Activated CD4-positive, alpha-beta memory T cell treated with anti-CD3 and anti-CD28 coated beads for 36 hours (primary cell): ENCODE measurements at regions of chr12 and their contacts with region 1.

Region 1: DNA sequence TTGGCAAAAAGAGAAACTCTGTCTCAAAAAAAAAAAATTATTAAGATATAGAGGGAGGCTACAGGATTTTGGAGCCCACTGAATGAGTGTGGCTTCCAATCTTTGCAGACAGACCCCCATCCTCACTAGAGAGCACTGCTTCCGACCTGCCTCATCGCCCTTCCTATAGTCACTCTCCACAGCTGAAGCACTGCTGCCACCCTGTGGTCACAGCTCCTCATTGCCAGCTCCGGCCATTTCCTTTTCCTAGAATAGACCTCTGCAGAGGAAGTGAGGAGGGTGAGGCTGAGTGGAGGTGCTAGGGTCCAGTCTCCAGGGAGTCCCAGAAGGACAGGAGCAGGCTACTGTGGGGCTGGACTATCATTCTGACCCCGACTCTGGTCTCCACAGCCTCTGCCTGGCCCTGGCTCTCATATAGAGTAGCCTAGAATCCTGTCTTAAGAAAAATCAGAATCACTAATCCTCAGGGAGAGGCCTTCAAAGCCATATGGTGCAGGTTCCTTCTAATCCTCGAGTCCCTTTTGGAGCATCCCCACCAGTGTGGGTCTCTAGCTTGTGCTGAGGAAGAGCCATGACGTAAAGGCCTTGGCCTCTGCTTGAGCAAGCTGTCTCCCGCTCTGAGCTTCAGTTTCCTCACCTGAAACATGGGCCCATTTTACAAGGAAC is 1.4 kb upstream of the NPFF start:
- DNase-seq: peak; percentile 92
- H3K4me3 Mint-ChIP-seq: no peak overlapping the region
- H3K27ac Mint-ChIP-seq: peak overlapping the region; percentile 67
- H3K4me1 Mint-ChIP-seq: peaks cover 12% of the 10 kb centered on the region
- H3K27me3 Mint-ChIP-seq: no peaks in the 10 kb centered on the region

Region 2: GRCh38 chr12:52992699-52993557 is 515.7 kb before region 1 on chr12:
- CTCF ChIA-PET with region 1: no interaction called
- POLR2A ChIA-PET with region 1: no interaction called
- intact Hi-C with region 1: no loop called
- DNase-seq: no peak
- H3K4me3 Mint-ChIP-seq: no peak overlapping the region
- H3K27ac Mint-ChIP-seq: no peak overlapping the region
- H3K4me1 Mint-ChIP-seq: no peaks in the 10 kb centered on the region
- H3K27me3 Mint-ChIP-seq: no peaks in the 10 kb centered on the region

Region 3: GRCh38 chr12:53327435-53328042 is 181.1 kb before region 1 on chr12:
- CTCF ChIA-PET with region 1: interaction called, 25 read pairs
- POLR2A ChIA-PET with region 1: interaction called, 5 read pairs
- intact Hi-C with region 1: loop called (anchors 1 kb)
- DNase-seq: no peak
- H3K4me3 Mint-ChIP-seq: no peak overlapping the region
- H3K27ac Mint-ChIP-seq: no peak overlapping the region
- H3K4me1 Mint-ChIP-seq: peaks cover 17% of the 10 kb centered on the region
- H3K27me3 Mint-ChIP-seq: peaks cover 4% of the 10 kb centered on the region

Region 4: GRCh38 chr12:53352331-53353256 is 156.1 kb before region 1 on chr12:
- CTCF ChIA-PET with region 1: interaction called, 55 read pairs
- POLR2A ChIA-PET with region 1: interaction called, 3 read pairs
- intact Hi-C with region 1: loop called (anchors 1 kb)
- DNase-seq: peak; percentile 90
- H3K4me3 Mint-ChIP-seq: no peak overlapping the region
- H3K27ac Mint-ChIP-seq: peak overlapping the region; percentile 12
- H3K4me1 Mint-ChIP-seq: peaks cover 9% of the 10 kb centered on the region
- H3K27me3 Mint-ChIP-seq: no peaks in the 10 kb centered on the region

Region 5: DNA sequence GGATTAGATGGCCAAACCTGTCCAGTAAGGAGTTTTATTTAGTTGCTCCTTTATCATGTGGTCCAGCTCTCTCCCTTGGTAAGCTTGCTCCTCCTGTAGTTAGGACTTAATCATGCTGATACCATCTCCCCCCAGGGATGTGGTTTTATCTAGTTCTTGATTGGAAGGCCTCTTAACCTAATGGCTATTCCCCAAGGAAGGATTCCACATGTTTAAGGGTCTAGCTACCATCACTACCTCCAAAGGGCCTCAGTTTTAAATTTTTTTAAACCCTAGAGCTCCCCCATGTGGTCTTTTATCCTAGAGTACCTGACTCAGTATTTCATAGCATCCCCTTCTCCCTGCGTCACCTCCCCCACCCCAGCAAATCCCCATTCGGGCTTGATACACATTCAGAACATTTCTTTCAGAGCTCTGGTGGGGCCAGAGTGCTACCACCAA is 31.9 kb before region 1 on chr12:
- CTCF ChIA-PET with region 1: interaction called, 22 read pairs
- POLR2A ChIA-PET with region 1: interaction called, 4 read pairs
- intact Hi-C with region 1: no loop called
- DNase-seq: no peak
- H3K4me3 Mint-ChIP-seq: no peak overlapping the region
- H3K27ac Mint-ChIP-seq: peak overlapping the region; percentile 94
- H3K4me1 Mint-ChIP-seq: peaks cover 60% of the 10 kb centered on the region
- H3K27me3 Mint-ChIP-seq: no peaks in the 10 kb centered on the region

Region 6: GRCh38 chr12:53645165-53645564 is 136.5 kb after region 1 on chr12:
- CTCF ChIA-PET with region 1: no interaction called
- POLR2A ChIA-PET with region 1: no interaction called
- intact Hi-C with region 1: no loop called
- DNase-seq: no peak
- H3K4me3 Mint-ChIP-seq: no peak overlapping the region
- H3K27ac Mint-ChIP-seq: no peak overlapping the region
- H3K4me1 Mint-ChIP-seq: no peaks in the 10 kb centered on the region
- H3K27me3 Mint-ChIP-seq: no peaks in the 10 kb centered on the region

Region 7: DNA sequence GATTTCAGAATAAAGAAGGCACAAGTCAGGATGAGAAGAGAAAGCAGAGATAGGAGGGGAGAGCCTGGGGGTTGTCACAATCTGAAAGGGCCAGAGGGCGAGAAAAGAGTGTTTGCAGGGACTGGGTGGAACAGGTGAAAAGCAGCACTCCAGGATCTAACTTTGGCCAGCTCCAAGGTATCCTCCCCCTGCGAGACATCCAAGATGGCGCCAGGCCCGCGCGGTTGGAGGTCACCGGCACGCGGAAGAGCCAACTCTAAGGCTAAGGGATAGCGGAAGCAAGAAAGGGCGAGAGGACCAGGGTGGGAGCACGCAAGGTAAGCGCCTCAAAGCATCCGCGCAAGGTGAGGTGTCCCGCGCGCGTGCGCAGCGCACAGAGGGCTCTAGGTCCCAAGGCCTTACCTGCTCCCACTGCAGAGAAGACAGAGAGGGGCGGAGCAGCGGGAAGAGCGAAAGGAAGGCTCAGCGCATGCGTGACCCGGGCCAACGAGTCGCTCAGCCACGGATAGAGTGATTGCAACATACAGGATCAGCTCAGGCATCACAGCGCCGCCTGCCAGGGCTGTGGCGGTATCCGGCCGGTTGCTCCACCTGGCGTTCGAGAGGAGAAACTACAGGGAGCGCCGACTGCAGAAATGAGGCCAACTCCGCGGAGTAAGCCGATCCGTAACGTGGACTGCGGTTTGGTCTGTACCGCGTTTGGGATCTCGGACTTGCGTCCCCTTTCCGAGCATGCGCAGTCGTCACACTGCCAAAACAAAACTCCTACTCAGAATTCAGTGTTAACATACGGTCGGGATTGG is 167.2 kb after region 1 on chr12 and contains the start of gene ATP5MC2:
- CTCF ChIA-PET with region 1: interaction called, 15 read pairs
- POLR2A ChIA-PET with region 1: no interaction called
- intact Hi-C with region 1: no loop called
- DNase-seq: peak; percentile 98
- H3K4me3 Mint-ChIP-seq: peak within 1 kb of the TSS; percentile 81
- H3K27ac Mint-ChIP-seq: peak within 1 kb of the TSS; percentile 89
- H3K4me1 Mint-ChIP-seq: peaks cover 26% of the 10 kb centered on the region
- H3K27me3 Mint-ChIP-seq: peaks cover 19% of the 10 kb centered on the region
- total RNA-seq, gene ATP5MC2: 378 TPM